Posterior vena cava (tissue), 2 donors: ENCODE measurements at regions of chr9 and their contacts with region 1.

Region 1: GRCh38 chr9:72280913-72281500 is 84.0 kb downstream of the ZFAND5 start:
- DNase-seq: peak; percentile 90

Region 2: DNA sequence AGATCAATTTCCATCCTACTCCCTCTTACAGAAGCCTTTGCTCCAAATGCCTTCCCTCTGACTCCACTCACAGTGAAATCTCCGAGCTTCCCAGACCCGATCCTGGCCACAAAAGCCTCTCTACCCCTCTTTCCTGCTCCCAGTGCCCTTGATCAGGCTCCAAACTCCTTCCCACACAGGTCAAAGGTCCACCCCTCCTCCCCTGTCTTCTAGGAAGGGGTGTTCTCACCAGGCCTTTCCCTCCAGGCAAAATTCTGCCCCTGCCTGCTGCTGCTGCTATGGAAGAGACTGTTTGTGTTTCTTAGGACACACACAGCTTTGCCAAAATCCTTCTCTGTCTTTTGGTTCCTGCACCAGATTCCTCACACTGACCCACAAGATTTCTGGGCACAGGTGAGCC is 757.6 kb after region 1 on chr9:
- intact Hi-C with region 1: loop called in 1 of 2 experiments (anchors 2 kb)
- DNase-seq: peak; percentile 86